ENCODE measurements at regions of chr20 and their contacts with region 1.

Region 1: DNA sequence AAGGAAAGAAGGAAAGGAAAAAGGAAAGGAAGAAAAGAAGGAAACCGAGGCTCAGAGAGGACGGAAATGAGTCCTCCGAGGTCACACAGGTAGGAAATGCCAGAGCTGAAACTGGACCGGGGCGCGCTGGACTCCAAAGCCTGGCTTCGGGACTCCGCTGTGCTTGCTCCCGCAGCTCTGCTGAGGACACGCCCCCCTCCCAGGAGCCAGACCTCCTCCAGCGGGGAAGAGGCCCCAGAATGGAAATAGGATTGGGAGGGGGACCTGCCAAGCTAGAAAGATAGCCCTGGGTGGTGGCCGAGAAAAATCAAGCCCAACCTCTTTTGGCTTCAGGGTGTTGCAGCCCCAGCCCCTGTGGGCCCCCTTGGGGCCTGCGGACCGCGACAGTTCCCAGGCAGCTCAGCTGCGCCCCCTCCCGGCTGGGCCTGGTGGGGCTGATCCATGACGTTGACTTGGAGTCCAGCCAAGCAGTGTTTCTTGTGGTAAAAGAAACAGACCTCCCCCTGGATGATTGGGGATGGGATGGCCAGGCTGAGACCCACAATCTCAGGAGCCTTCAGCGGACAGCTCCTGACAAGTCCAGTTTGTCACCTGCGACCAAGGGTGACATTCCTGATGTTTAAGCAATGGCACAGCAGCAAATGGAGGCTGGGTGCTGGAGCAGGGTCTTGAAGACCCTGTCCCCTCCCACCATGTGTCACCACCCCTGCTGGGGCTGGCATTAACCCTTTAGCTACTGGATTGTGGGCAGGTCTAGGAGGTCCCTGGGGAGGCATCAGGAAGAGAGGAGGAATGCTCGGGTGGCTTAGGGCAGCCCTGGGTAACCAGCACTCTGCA is 55.5 kb downstream of the RIPOR3 start:
- H3K4me3 ChIP-seq: no peak overlapping the region
- H3K27ac ChIP-seq: no peak overlapping the region
- H3K4me1 ChIP-seq: peaks cover 4% of the 10 kb centered on the region
- CTCF ChIP-seq: peak; percentile 94

Region 2: GRCh38 chr20:50658796-50659323 is 23.0 kb after region 1 on chr20:
- CTCF ChIA-PET with region 1: interaction called, 10 read pairs
- POLR2A ChIA-PET with region 1: no interaction called
- H3K4me3 ChIP-seq: no peak overlapping the region
- H3K27ac ChIP-seq: no peak overlapping the region
- H3K4me1 ChIP-seq: no peaks in the 10 kb centered on the region
- CTCF ChIP-seq: no peak

Region 3: GRCh38 chr20:50784464-50784863 is 148.6 kb after region 1 on chr20:
- CTCF ChIA-PET with region 1: interaction called, 10 read pairs
- POLR2A ChIA-PET with region 1: no interaction called
- H3K4me3 ChIP-seq: no peak overlapping the region
- H3K27ac ChIP-seq: no peak overlapping the region
- H3K4me1 ChIP-seq: no peaks in the 10 kb centered on the region
- CTCF ChIP-seq: no peak

Measured in HEK293 (cell line).